K562 (cell line): ENCODE measurements at regions of chr1 and their contacts with region 1.

Region 1: GRCh38 chr1:60872426-60873054 is 209.8 kb upstream of the NFIA start:
- DNase-seq: no peak
- ATAC-seq: no peak
- H3K4me3 ChIP-seq: no peak overlapping the region
- H3K27ac ChIP-seq: no peak overlapping the region
- H3K4me1 ChIP-seq: no peaks in the 10 kb centered on the region; a peak in 2 of 5 replicates
- H3K27me3 ChIP-seq: peaks cover 3 to 4% of the 10 kb centered on the region in 2 experiments; a peak in 1 of 5 replicates
- CTCF ChIP-seq: no peak
- EP300 ChIP-seq: no peak
- POLR2A ChIP-seq: no peak
- RAD21 ChIP-seq: no peak

Region 2: GRCh38 chr1:60848583-60849188 is 23.9 kb before region 1 on chr1:
- CTCF ChIA-PET with region 1: no interaction called
- POLR2A ChIA-PET with region 1: no interaction called
- in situ Hi-C with region 1: no loop called
- intact Hi-C with region 1: no loop called
- DNase-seq: peak in 2 of 4 experiments; percentile 19 to 53
- ATAC-seq: peak; percentile 90
- H3K4me3 ChIP-seq: no peak overlapping the region
- H3K27ac ChIP-seq: no peak overlapping the region
- H3K4me1 ChIP-seq: no peaks in the 10 kb centered on the region
- H3K27me3 ChIP-seq: no peaks in the 10 kb centered on the region
- CTCF ChIP-seq: peak; percentile 43 to 67 (median 54); a peak in 5 of 6 replicates
- EP300 ChIP-seq: peak; percentile 70
- POLR2A ChIP-seq: no peak
- RAD21 ChIP-seq: peak; percentile 67 to 80

Region 3: GRCh38 chr1:60950224-60951063 is 77.9 kb after region 1 on chr1:
- CTCF ChIA-PET with region 1: no interaction called
- POLR2A ChIA-PET with region 1: interaction called, 3 read pairs
- in situ Hi-C with region 1: no loop called
- intact Hi-C with region 1: loop called (anchors 2 kb)
- DNase-seq: no peak
- ATAC-seq: no peak
- H3K4me3 ChIP-seq: no peak overlapping the region
- H3K27ac ChIP-seq: no peak overlapping the region
- H3K4me1 ChIP-seq: no peaks in the 10 kb centered on the region; a peak in 3 of 5 replicates
- H3K27me3 ChIP-seq: no peaks in the 10 kb centered on the region
- CTCF ChIP-seq: no peak
- EP300 ChIP-seq: no peak
- POLR2A ChIP-seq: no peak
- RAD21 ChIP-seq: no peak